Activated CD8-positive, alpha-beta T cell treated with anti-CD3 and anti-CD28 coated beads for 36 hours (primary cell): ENCODE measurements at regions of chr2 and their contacts with region 1.

Region 1: DNA sequence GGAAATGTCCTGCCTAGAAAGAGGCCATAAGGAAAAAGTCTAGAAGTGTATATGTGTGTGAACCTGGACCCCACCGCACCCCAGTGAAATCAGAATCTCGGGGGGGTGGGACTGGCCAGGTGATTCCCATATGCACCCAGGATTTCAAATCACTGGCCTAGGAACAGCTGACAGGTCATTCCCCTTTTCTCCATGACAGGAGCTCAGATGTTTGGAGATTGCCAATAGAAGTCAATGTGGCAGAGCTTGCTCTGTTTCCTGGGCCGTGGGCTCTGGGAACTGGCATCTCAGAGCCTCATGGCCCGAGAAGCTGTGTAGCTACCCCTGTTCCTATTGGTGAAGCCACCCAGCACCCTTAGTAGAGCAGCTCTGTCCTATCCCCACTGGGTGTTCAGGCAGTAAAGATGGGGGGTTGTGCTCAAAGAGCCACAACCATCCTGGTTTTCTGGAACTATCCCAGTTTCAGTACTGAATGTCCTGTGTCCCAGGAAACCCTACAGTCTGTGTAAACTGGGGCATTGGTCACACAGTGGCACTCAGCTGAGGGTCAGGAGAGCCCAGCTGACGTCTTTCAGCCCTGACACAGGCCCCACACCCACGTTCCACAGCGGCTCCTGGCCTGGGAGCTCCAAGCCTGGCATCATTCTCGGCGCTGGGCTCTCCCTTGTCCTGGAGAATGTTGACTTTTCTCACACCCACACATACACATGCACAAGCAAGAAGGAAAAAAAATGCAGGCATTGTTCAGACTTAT is 18.9 kb downstream of the GNLY start:
- DNase-seq: no peak
- ATAC-seq: no peak
- H3K4me3 Mint-ChIP-seq: no peak overlapping the region
- H3K27ac Mint-ChIP-seq: no peak overlapping the region
- H3K4me1 Mint-ChIP-seq: peaks cover 4% of the 10 kb centered on the region
- H3K27me3 Mint-ChIP-seq: peaks cover 1% of the 10 kb centered on the region
- CTCF ChIP-seq: no peak

Region 2: GRCh38 chr2:85734942-85735608 is 22.0 kb after region 1 on chr2:
- CTCF ChIA-PET with region 1: interaction called, 17 read pairs
- POLR2A ChIA-PET with region 1: no interaction called
- intact Hi-C with region 1: loop called (anchors 1 kb)
- DNase-seq: no peak
- ATAC-seq: no peak
- H3K4me3 Mint-ChIP-seq: no peak overlapping the region
- H3K27ac Mint-ChIP-seq: no peak overlapping the region
- H3K4me1 Mint-ChIP-seq: no peaks in the 10 kb centered on the region
- H3K27me3 Mint-ChIP-seq: peaks cover 2% of the 10 kb centered on the region
- CTCF ChIP-seq: no peak